Endothelial cell of umbilical vein (primary cell): ENCODE measurements at regions of chr16 and their contacts with region 1.

Region 1: DNA sequence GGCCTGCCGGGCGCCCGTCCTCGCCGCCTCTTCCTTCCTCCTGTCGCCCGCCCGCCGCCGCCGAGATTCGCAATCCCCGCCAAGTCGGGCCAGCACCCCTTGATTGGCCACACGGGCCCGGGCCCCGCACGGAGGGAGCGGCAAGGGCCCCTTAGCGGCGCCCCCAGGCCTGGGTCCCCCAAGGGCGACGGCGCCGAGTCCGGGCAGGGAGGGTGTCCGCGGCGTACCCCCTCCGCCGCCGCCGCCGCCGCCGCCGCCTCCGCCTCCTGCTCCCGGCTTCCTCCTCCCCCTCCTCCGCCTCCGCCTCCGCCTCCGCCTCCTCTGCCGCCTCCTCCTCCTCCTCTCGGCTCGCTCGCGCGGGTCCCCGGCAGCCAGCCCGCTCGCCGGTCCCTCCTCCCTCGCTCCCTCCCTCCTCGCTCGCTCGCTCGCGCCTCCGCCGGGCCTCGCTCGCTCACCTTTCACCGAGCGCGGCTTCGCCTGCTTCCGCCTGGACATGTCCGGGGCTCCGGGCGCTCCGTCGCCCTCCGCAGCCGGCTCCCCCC is 561 bp downstream of the ZNF423 start:
- DNase-seq: peak; percentile 73
- H3K4me3 ChIP-seq: peak overlapping the region; percentile 48 to 92 (median 49)
- H3K27ac ChIP-seq: peak overlapping the region; percentile 19
- H3K4me1 ChIP-seq: peaks cover 31% of the 10 kb centered on the region
- H3K27me3 ChIP-seq: peaks cover 34 to 54% of the 10 kb centered on the region in 2 experiments
- CTCF ChIP-seq: no peak
- POLR2A ChIP-seq: peak; percentile 73

Region 2: DNA sequence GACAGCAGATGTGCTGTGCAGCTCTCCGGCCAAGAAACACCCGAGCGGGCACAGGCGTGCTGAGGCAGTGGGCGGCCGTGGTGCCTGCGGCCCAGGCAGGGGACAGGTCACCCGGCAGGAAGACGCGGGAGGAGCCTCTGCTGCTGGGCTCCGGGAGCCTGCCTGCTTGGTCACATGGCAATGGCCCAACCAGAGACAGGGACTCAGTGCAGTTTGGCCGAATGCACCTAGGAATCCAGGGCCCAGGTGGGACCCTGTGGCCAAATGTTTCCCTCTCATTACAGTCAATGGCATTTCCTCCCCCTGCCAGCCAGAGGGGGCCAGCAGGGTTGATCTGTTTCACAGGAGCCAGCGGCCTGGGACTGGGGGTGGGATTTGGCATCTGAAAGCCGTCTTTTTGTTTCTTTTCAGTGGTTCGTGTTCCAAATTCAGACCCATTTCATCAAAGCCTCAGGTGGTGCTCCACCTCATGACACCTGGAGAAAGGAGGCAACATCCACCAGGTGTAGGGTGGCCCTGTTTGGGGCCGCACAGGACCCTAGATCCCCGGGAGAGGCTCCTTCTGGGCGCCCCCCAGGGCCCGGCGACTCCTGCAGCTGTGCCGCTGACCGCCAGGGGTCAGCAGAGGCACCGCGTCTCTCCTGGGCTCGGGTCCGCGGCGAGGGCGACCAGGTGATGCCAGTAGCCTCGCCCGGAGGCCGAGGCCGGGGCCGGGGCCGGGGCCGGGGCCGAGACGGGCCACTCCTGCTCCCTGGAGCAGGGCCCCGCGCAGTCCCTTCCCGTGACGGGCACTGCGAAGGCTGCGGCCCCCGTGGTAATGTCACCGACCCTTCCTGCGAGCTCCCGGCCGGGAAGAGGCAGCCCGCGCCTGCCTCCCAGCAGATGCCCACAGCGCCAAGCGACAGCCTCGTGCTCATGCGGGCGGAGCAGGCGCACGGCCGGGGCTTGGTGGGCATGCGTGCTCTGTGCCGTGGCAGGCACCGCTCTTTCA is 363.3 kb before region 1 on chr16:
- CTCF ChIA-PET with region 1: interaction called, 15 read pairs
- POLR2A ChIA-PET with region 1: no interaction called
- dilution Hi-C with region 1: no loop called
- intact Hi-C with region 1: loop called (anchors 1 kb)
- DNase-seq: peak; percentile 34
- H3K4me3 ChIP-seq: peak overlapping the region in 1 of 3 experiments; percentile 13
- H3K27ac ChIP-seq: no peak overlapping the region
- H3K4me1 ChIP-seq: no peaks in the 10 kb centered on the region
- H3K27me3 ChIP-seq: no peaks in the 10 kb centered on the region
- CTCF ChIP-seq: peak; percentile 81 to 96
- POLR2A ChIP-seq: no peak

Region 3: DNA sequence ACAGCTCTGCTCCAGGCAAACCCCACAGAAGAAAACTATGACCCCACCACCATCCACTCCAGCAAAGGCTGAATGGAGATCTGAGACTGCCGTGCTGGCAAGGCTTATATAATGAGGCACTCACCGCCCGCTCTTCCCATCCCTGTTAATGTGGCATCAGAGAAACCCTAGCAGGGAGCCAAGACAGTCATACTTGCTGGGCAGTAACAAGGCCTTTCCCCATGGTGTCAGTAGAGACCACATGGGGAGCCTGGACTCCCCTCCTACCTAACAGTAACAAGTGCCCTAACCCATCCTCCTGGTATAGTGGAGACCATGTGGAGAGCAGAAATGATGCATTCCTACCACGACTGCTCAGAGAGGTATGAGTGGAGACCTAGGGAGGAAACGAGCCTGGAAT is 246.6 kb before region 1 on chr16:
- CTCF ChIA-PET with region 1: interaction called, 5 read pairs
- POLR2A ChIA-PET with region 1: no interaction called
- dilution Hi-C with region 1: no loop called
- intact Hi-C with region 1: loop called (anchors 1 kb)
- DNase-seq: peak; percentile 38
- H3K4me3 ChIP-seq: no peak overlapping the region
- H3K27ac ChIP-seq: no peak overlapping the region
- H3K4me1 ChIP-seq: peaks cover 10% of the 10 kb centered on the region
- H3K27me3 ChIP-seq: no peaks in the 10 kb centered on the region
- CTCF ChIP-seq: peak; percentile 25 to 49
- POLR2A ChIP-seq: no peak

Region 4: GRCh38 chr16:49755313-49755620 is 100.1 kb before region 1 on chr16:
- CTCF ChIA-PET with region 1: interaction called, 10 read pairs
- POLR2A ChIA-PET with region 1: interaction called, 4 read pairs
- dilution Hi-C with region 1: no loop called
- intact Hi-C with region 1: loop called (anchors 1 kb)
- DNase-seq: peak; percentile 63
- H3K4me3 ChIP-seq: peak overlapping the region in 2 of 3 experiments; percentile 16 to 18
- H3K27ac ChIP-seq: no peak overlapping the region
- H3K4me1 ChIP-seq: peaks cover 12% of the 10 kb centered on the region
- H3K27me3 ChIP-seq: no peaks in the 10 kb centered on the region
- CTCF ChIP-seq: peak; percentile 26 to 46
- POLR2A ChIP-seq: no peak

Region 5: GRCh38 chr16:49827805-49828438 is 27.4 kb before region 1 on chr16:
- CTCF ChIA-PET with region 1: interaction called, 20 read pairs
- POLR2A ChIA-PET with region 1: no interaction called
- dilution Hi-C with region 1: no loop called
- intact Hi-C with region 1: loop called (anchors 1 kb)
- DNase-seq: peak; percentile 77
- H3K4me3 ChIP-seq: no peak overlapping the region
- H3K27ac ChIP-seq: no peak overlapping the region
- H3K4me1 ChIP-seq: peaks cover 42% of the 10 kb centered on the region
- H3K27me3 ChIP-seq: no peaks in the 10 kb centered on the region
- CTCF ChIP-seq: no peak
- POLR2A ChIP-seq: no peak

Region 6: GRCh38 chr16:49886554-49887094 is 31.3 kb after region 1 on chr16:
- CTCF ChIA-PET with region 1: no interaction called
- POLR2A ChIA-PET with region 1: no interaction called
- dilution Hi-C with region 1: no loop called
- intact Hi-C with region 1: no loop called
- DNase-seq: no peak
- H3K4me3 ChIP-seq: no peak overlapping the region
- H3K27ac ChIP-seq: no peak overlapping the region
- H3K4me1 ChIP-seq: no peaks in the 10 kb centered on the region
- H3K27me3 ChIP-seq: no peaks in the 10 kb centered on the region
- CTCF ChIP-seq: no peak
- POLR2A ChIP-seq: no peak